ENCODE measurements at regions of chr11 and their contacts with region 1.

Region 1: DNA sequence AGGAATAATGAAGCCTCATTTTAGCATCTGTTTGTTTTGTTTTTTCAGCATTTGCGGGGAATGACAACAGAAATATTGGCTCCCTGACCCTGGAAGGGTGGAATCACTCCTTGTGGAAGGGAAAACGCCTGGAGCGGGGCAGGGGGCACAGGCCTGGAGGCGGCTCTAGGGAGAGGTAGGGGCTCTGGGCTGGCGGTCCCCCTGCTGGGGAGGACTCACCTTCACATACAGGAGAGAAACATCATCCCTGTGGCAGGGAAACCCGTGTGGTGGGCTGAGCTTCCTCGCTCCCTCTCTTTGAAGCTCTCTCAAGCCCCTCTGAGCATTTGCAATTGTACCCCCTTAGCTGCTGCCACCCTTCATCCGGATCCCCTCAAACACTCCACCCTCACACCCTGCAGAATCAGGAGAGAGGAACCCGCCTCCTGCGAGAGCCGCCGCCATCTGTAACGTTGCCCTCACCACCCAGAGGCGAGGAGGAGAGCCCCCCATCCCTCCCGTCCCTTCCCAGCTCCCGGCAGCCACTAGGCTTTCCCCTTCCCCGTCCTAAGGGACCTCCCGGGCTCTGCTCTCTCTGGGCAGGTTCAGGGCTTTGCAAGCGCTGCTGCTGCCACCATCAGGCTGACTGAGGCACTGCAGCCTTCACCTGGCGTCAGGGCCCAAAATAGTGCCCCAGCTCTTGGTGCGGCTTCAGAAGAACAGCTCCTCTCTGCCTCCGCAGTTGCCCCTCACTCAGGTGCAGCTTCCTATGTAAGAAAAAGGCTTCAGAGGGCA is 10.4 kb downstream of the KIRREL3 start:
- DNase-seq: peak; percentile 85 to 96
- H3K4me3 ChIP-seq: 0 out of 8 replicates have a peak overlapping the region, but pooled peaks of 1 of the 4 experiments have one; percentile 34
- H3K27ac ChIP-seq: no peak overlapping the region
- H3K4me1 ChIP-seq: peaks cover 0 to 3% (median 1%) of the 10 kb centered on the region in 4 experiments; a peak in 1 of 7 replicates
- H3K27me3 ChIP-seq: peaks cover 0 to 6% (median 2%) of the 10 kb centered on the region in 4 experiments; a peak in 1 of 7 replicates
- CTCF ChIP-seq: peak; percentile 93 to 99 (median 97)
- EP300 ChIP-seq: no peak
- POLR2A ChIP-seq: no peak
- RAD21 ChIP-seq: peak; percentile 97

Region 2: DNA sequence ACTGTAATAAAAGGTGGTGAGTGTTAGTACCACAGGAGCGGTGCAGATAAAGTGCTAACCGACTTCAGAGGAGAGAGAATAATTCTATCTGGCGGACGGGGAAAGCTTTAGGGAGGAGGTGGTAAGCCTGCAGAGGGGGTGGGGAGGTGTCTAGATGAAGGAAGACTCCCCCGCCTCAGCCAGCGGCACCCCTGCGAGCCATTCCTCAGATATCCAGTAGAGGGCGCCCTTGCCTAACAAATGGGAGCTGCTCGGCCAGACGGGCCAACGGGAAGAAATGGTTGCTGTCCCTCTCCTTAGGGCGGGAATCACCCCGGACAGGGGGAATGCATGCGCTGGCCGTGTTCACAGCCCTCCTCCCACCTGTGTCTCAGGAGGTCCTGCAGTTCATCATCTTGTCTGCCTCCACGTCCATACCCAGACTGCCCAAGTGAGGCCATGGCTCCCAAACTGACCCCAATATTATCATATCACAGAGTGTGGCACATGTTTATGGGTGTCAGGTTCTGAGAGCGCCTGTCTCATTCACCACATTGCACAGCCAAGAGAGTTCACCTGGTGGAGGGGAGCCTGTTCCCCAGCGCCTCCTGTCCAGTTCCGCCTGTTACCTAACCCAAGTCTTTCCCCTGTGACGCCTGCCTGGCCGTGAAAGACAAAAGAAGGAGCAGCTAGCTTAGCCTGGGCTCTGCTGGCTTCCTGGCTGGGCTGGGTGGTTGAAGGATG is 549.2 kb before region 1 on chr11:
- CTCF ChIA-PET with region 1: interaction called, 10 read pairs
- POLR2A ChIA-PET with region 1: no interaction called
- DNase-seq: peak; percentile 64 to 98
- H3K4me3 ChIP-seq: peak overlapping the region in 1 of 4 experiments; percentile 13; a peak in 1 of 8 replicates
- H3K27ac ChIP-seq: no peak overlapping the region
- H3K4me1 ChIP-seq: peaks cover 4 to 11% (median 8%) of the 10 kb centered on the region in 4 experiments; a peak in 5 of 7 replicates
- H3K27me3 ChIP-seq: no peaks in the 10 kb centered on the region
- CTCF ChIP-seq: peak; percentile 91 to 96 (median 93)
- EP300 ChIP-seq: no peak
- POLR2A ChIP-seq: no peak
- RAD21 ChIP-seq: peak; percentile 100

Region 3: GRCh38 chr11:126716456-126717083 is 273.6 kb before region 1 on chr11:
- CTCF ChIA-PET with region 1: interaction called, 36 read pairs
- POLR2A ChIA-PET with region 1: no interaction called
- DNase-seq: peak in 1 of 2 experiments; percentile 83
- H3K4me3 ChIP-seq: no peak overlapping the region
- H3K27ac ChIP-seq: no peak overlapping the region
- H3K4me1 ChIP-seq: peaks cover 0 to 7% (median 0%) of the 10 kb centered on the region in 4 experiments; a peak in 2 of 7 replicates
- H3K27me3 ChIP-seq: no peaks in the 10 kb centered on the region
- CTCF ChIP-seq: peak; percentile 60 to 85 (median 78)
- EP300 ChIP-seq: no peak
- POLR2A ChIP-seq: no peak
- RAD21 ChIP-seq: peak; percentile 84 to 87

Region 4: GRCh38 chr11:126800009-126800408 is 190.1 kb before region 1 on chr11:
- CTCF ChIA-PET with region 1: no interaction called
- POLR2A ChIA-PET with region 1: no interaction called
- DNase-seq: no peak
- H3K4me3 ChIP-seq: no peak overlapping the region
- H3K27ac ChIP-seq: no peak overlapping the region
- H3K4me1 ChIP-seq: no peaks in the 10 kb centered on the region; a peak in 1 of 7 replicates
- H3K27me3 ChIP-seq: no peaks in the 10 kb centered on the region
- CTCF ChIP-seq: no peak
- EP300 ChIP-seq: no peak
- POLR2A ChIP-seq: no peak
- RAD21 ChIP-seq: no peak

Region 5: GRCh38 chr11:126874831-126875230 is 115.3 kb before region 1 on chr11:
- CTCF ChIA-PET with region 1: interaction called, 16 read pairs
- POLR2A ChIA-PET with region 1: no interaction called
- DNase-seq: no peak
- H3K4me3 ChIP-seq: no peak overlapping the region
- H3K27ac ChIP-seq: no peak overlapping the region
- H3K4me1 ChIP-seq: no peaks in the 10 kb centered on the region
- H3K27me3 ChIP-seq: no peaks in the 10 kb centered on the region
- CTCF ChIP-seq: peak; percentile 50 to 76 (median 64)
- EP300 ChIP-seq: no peak
- POLR2A ChIP-seq: no peak
- RAD21 ChIP-seq: peak; percentile 79 to 82

Region 6: GRCh38 chr11:126930091-126930841 is 59.9 kb before region 1 on chr11:
- CTCF ChIA-PET with region 1: no interaction called
- POLR2A ChIA-PET with region 1: no interaction called
- DNase-seq: no peak
- H3K4me3 ChIP-seq: no peak overlapping the region
- H3K27ac ChIP-seq: no peak overlapping the region
- H3K4me1 ChIP-seq: no peaks in the 10 kb centered on the region
- H3K27me3 ChIP-seq: no peaks in the 10 kb centered on the region
- CTCF ChIP-seq: no peak
- EP300 ChIP-seq: no peak
- POLR2A ChIP-seq: no peak
- RAD21 ChIP-seq: no peak

Region 7: GRCh38 chr11:126963603-126964363 is 26.3 kb before region 1 on chr11:
- CTCF ChIA-PET with region 1: interaction called, 25 read pairs
- POLR2A ChIA-PET with region 1: no interaction called
- DNase-seq: no peak
- H3K4me3 ChIP-seq: no peak overlapping the region
- H3K27ac ChIP-seq: no peak overlapping the region
- H3K4me1 ChIP-seq: peaks cover 0 to 2% (median 0%) of the 10 kb centered on the region in 4 experiments; a peak in 2 of 7 replicates
- H3K27me3 ChIP-seq: peaks cover 0 to 1% (median 0%) of the 10 kb centered on the region in 4 experiments; a peak in 1 of 7 replicates
- CTCF ChIP-seq: no peak
- EP300 ChIP-seq: no peak
- POLR2A ChIP-seq: no peak
- RAD21 ChIP-seq: no peak

Region 8: GRCh38 chr11:126978911-126979310 is 11.2 kb before region 1 on chr11:
- CTCF ChIA-PET with region 1: interaction called, 94 read pairs
- POLR2A ChIA-PET with region 1: no interaction called
- DNase-seq: no peak
- H3K4me3 ChIP-seq: no peak overlapping the region; a peak in 1 of 8 replicates
- H3K27ac ChIP-seq: no peak overlapping the region; the same call in 1 of the 2 replicates
- H3K4me1 ChIP-seq: peaks cover 5 to 14% (median 9%) of the 10 kb centered on the region in 4 experiments
- H3K27me3 ChIP-seq: no peaks in the 10 kb centered on the region
- CTCF ChIP-seq: no peak
- EP300 ChIP-seq: no peak
- POLR2A ChIP-seq: no peak
- RAD21 ChIP-seq: no peak

Region 9: GRCh38 chr11:127074151-127074761 is 84.1 kb after region 1 on chr11:
- CTCF ChIA-PET with region 1: interaction called, 20 read pairs
- POLR2A ChIA-PET with region 1: no interaction called
- DNase-seq: peak in 1 of 2 experiments; percentile 21
- H3K4me3 ChIP-seq: no peak overlapping the region
- H3K27ac ChIP-seq: no peak overlapping the region
- H3K4me1 ChIP-seq: no peaks in the 10 kb centered on the region
- H3K27me3 ChIP-seq: no peaks in the 10 kb centered on the region
- CTCF ChIP-seq: peak in 2 of 3 experiments; percentile 69 to 79; a peak in 3 of 4 replicates
- EP300 ChIP-seq: no peak
- POLR2A ChIP-seq: no peak
- RAD21 ChIP-seq: peak; percentile 80 to 87

Measured in H1 (cell line).